ENCODE measurements at regions of chr3 and their contacts with region 1.

Region 1: DNA sequence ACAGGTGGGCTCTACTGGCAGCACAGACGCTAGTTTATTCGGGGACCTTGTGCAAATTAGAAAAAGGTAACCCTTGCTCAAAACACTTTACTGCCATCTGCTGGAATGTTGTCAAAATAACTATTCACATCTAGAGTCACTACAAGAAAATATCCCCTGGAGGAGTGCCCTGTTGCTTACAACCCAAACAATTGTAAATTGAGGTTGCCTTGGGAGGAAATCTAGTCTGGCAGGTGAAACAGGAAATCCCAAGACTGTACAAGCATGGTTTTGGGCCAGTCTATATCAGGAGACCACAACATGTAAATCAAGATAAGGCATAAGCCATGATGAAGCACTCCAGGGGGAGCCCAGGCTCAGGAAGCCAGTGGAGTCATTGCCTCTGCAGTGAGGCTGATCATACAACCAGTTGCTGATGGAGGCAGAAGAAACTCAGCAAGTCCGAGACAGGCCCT is 136.8 kb upstream of the ACP3 start:
- DNase-seq: peak in 4 of 5 donors; percentile 14 to 37 (median 23)
- H3K4me3 ChIP-seq: no peak overlapping the region
- H3K4me3 Mint-ChIP-seq: peak overlapping the region in 1 of 8 donors; percentile 64
- H3K27ac ChIP-seq: no peak overlapping the region
- H3K27ac Mint-ChIP-seq: no peak overlapping the region
- H3K4me1 ChIP-seq: peaks cover 3% of the 10 kb centered on the region
- H3K4me1 Mint-ChIP-seq: peaks cover 4 to 6% (median 5%) of the 10 kb centered on the region in 4 donors
- H3K27me3 ChIP-seq: no peaks in the 10 kb centered on the region
- H3K27me3 Mint-ChIP-seq: peaks cover 3 to 5% of the 10 kb centered on the region in 2 donors

Region 2: GRCh38 chr3:130759699-130760338 is 1420.5 kb before region 1 on chr3:
- CTCF ChIA-PET with region 1: no interaction called
- POLR2A ChIA-PET with region 1: no interaction called
- intact Hi-C with region 1: loop called (anchors 10 kb)
- DNase-seq: peak; percentile 55 to 63 (median 58)
- H3K4me3 ChIP-seq: no peak overlapping the region
- H3K4me3 Mint-ChIP-seq: no peak overlapping the region
- H3K27ac ChIP-seq: no peak overlapping the region
- H3K27ac Mint-ChIP-seq: peak overlapping the region in 1 of 7 donors; percentile 65
- H3K4me1 ChIP-seq: no peaks in the 10 kb centered on the region
- H3K4me1 Mint-ChIP-seq: no peaks in the 10 kb centered on the region
- H3K27me3 ChIP-seq: no peaks in the 10 kb centered on the region
- H3K27me3 Mint-ChIP-seq: peaks cover 4 to 12% of the 10 kb centered on the region in 2 donors

Region 3: GRCh38 chr3:132352541-132353143 is 172.3 kb after region 1 on chr3:
- CTCF ChIA-PET with region 1: no interaction called
- POLR2A ChIA-PET with region 1: no interaction called
- intact Hi-C with region 1: no loop called
- DNase-seq: peak; percentile 53 to 67 (median 60)
- H3K4me3 ChIP-seq: no peak overlapping the region
- H3K4me3 Mint-ChIP-seq: no peak overlapping the region
- H3K27ac ChIP-seq: no peak overlapping the region
- H3K27ac Mint-ChIP-seq: peak overlapping the region in 1 of 7 donors; percentile 60
- H3K4me1 ChIP-seq: no peaks in the 10 kb centered on the region
- H3K4me1 Mint-ChIP-seq: peaks cover 0 to 4% (median under 1%) of the 10 kb centered on the region in 4 donors
- H3K27me3 ChIP-seq: no peaks in the 10 kb centered on the region
- H3K27me3 Mint-ChIP-seq: peaks cover 3 to 10% of the 10 kb centered on the region in 2 donors